BJ (cell line): ENCODE measurements at regions of chr4 and their contacts with region 1.

Region 1: DNA sequence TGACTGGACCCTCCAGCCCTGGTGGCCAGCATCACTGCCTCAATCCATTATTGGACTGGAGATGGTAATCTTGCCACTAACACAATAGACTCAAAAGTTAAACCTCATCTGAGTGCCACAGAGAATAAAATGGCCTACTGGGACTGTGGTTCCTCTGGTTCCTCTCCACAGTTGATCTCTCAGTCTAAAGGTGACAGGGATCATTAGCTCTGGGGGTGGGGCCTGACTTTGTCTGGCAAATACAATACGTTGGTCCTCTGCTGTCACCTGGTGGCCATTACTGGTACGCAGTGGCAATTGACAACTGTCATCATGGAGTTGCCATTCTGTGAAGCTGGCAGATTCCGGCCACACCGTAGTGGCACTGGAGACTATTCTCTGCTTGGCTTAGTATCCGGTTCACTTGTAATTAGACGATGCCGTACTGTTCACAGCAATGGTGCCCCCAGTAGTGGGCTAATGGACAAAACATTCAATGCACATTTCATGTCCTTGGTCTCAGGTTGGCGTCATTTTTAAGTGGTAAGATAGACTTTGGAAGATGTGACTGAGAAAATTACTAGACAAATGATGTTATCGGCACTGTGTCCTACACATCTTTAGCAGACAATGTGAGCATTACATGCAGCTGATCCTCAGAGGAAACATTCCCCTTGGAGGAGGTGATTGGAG is 6.7 kb downstream of the FGFBP2 start:
- DNase-seq: no peak
- H3K4me3 ChIP-seq: no peak overlapping the region
- H3K27me3 ChIP-seq: peaks cover 3% of the 10 kb centered on the region
- CTCF ChIP-seq: peak; percentile 98

Region 2: DNA sequence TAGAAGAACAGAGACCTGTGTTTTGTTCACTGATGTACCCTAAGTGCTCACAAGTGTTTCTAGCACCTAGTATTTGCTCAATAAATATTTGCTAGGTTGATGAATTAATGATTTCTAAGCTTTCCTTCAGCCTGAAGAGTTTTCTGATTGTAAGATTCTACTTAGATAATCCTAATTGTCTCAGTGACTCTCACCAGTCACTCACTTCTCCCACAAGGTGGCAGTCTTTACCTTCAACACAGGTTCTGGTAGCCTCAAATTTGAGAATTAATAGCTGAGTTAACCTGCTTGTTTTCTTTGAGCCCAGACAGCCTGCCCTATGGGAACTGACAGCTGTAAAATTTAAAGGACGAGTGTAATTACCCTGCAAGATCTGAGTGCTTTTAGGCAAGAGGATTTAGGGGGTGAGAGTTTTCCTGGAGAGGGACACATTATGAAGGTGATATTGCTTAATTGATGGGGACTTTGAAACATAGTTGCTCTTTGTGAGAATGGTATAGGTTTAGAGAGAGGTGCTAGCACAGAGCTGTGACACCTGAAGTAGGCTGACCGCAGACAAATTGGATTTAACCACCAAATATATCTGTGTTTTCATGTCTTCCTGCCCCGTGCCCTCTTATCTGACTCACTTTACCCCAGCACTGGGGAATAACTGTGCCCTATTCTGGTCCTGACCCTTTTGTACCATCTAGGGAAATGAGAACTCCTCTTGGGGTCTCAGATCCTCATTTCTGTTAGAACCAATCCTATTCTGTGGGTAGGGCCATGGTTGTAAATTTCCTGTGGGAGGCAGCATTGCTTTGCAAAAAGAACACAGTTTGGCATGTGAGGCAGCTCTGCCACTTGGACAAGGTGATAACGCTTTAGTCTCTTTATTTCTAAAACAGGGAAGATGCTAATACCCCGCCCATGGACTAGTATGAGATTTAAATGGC is 150.5 kb before region 1 on chr4:
- CTCF ChIA-PET with region 1: interaction called, 45 read pairs
- POLR2A ChIA-PET with region 1: no interaction called
- DNase-seq: no peak
- H3K4me3 ChIP-seq: no peak overlapping the region
- H3K27me3 ChIP-seq: peaks cover 3% of the 10 kb centered on the region; the same call in 1 of the 2 replicates
- CTCF ChIP-seq: peak; percentile 71

Region 3: DNA sequence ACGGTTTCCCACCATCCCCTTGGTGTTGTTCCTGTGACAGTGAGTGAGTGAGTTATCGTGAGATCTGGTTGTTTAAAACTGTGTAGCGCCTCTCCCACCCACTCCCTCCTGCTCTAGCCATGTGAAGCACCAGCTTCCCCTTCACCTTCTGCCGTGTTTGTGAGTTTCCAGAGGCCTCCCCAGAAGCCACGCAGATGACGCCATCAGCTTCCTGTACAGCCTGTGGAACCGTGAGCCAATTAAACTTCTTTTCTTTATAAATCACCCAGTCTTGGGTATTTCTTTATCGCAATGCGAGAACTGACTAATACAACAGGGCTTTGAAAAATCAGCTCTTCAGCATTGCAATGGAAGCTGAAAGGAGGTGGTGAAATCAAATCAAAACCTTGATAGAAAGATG is 67.8 kb before region 1 on chr4:
- CTCF ChIA-PET with region 1: interaction called, 192 read pairs
- POLR2A ChIA-PET with region 1: no interaction called
- DNase-seq: no peak
- H3K4me3 ChIP-seq: no peak overlapping the region
- H3K27me3 ChIP-seq: peaks cover 6% of the 10 kb centered on the region; the same call in 1 of the 2 replicates
- CTCF ChIP-seq: no peak

Region 4: GRCh38 chr4:15920723-15921591 is 35.4 kb before region 1 on chr4:
- CTCF ChIA-PET with region 1: interaction called, 12 read pairs
- POLR2A ChIA-PET with region 1: no interaction called
- DNase-seq: peak; percentile 79
- H3K4me3 ChIP-seq: no peak overlapping the region
- H3K27me3 ChIP-seq: no peaks in the 10 kb centered on the region
- CTCF ChIP-seq: no peak

Region 5: GRCh38 chr4:15945516-15945915 is 10.8 kb before region 1 on chr4:
- CTCF ChIA-PET with region 1: interaction called, 13 read pairs
- POLR2A ChIA-PET with region 1: no interaction called
- DNase-seq: no peak
- H3K4me3 ChIP-seq: no peak overlapping the region
- H3K27me3 ChIP-seq: peaks cover 6% of the 10 kb centered on the region
- CTCF ChIP-seq: no peak

Region 6: DNA sequence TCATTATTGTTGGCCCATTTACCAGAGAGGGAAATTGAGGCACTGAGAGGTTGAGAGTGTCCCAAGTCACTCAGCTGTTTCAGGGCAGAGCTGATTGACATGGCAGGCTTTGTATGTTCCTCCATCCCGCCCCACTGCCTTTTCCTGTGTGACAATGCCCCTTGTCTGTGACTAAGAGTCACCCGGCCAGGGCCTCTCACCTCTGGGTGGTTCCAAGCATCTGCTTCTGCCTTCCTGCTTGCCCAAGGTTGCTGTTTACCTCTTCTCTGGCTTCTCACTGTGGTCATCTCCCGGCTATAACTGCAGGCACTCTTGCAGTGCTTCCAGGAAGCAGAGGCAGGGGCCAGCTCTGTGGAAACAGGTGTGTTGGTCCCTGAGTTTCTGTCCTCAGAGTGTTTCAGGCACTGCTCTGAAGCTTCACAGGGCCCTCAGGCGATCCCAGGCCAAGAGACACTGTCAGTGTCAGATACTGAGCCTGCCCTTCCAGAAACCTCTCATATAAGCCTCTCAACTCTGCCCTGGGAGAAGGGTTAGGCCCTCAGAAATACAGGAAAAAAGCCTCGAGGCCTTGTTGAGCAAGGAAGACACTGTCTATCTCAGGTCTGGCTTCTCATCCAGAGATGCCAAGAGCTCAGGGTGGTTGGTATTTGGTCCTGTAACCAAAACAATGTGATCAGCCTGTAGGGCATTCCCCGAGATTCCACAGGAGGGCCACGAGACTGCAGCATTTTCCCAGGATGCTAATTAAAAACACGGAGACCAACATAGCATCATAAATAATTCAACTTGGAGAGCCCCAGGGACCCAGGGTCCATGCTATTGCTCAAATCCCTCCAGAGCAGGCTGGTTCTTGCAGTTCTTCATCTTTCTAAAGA is 169.5 kb after region 1 on chr4:
- CTCF ChIA-PET with region 1: no interaction called
- POLR2A ChIA-PET with region 1: no interaction called
- DNase-seq: no peak
- H3K4me3 ChIP-seq: no peak overlapping the region
- H3K27me3 ChIP-seq: peaks cover 4% of the 10 kb centered on the region
- CTCF ChIP-seq: no peak